ENCODE measurements at regions of chr18 and their contacts with region 1.

Region 1: GRCh38 chr18:13435596-13436327 is 217.2 kb downstream of the LDLRAD4 start:
- DNase-seq: peak; percentile 22
- H3K4me3 Mint-ChIP-seq: no peak overlapping the region
- H3K27ac Mint-ChIP-seq: no peak overlapping the region
- H3K4me1 Mint-ChIP-seq: peaks cover 58% of the 10 kb centered on the region
- H3K27me3 Mint-ChIP-seq: no peaks in the 10 kb centered on the region

Region 2: DNA sequence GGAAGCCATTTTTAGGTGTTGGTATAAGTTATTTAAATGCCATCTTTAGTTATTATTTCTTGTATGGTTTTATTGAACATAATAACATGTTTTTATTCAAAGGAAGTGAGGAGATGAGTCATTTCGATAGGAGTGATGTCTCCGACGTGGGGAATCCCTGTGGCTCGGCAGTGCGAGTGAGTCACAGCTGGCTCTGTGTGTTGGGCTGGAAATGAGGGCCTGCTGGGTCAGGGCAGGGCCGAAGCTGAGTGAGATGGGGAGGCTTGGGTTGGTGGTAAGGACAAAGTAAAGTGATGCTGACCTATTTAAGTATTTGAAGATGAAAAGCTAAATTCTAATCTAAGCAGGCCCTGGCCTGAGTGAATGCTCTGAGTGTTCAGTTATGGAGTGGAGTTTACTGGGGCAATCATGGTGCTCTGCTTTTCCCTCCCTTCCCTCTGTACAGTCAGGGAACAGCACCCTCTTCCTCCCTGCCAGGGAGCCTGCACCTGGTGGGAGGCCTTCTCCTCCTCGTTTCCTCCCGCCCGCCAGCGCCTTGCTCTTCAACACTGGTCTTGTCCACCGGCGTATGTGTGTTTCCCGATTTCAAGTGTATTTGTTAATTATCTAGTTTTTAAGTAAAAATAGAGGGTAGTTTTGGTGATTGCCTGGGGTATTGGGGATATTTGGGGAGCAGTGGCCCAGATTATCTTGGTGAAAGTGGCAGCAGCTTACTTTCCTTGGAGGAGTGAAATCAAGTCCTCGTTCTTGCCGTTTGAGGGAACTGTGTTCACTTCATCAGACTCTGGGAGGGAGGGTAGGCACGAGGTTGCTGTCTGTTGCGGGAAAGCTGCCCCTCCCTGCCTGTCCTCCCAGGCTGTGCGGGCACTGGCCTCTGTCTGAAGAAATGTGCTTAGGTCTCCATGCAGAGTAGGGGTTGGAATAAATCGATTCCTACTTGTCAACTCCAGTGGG is 60.2 kb before region 1 on chr18:
- CTCF ChIA-PET with region 1: interaction called, 4 read pairs
- POLR2A ChIA-PET with region 1: interaction called, 10 read pairs
- intact Hi-C with region 1: loop called (anchors 1 kb)
- DNase-seq: peak; percentile 92
- H3K4me3 Mint-ChIP-seq: peak overlapping the region; percentile 49
- H3K27ac Mint-ChIP-seq: peak overlapping the region; percentile 97
- H3K4me1 Mint-ChIP-seq: peaks cover 79% of the 10 kb centered on the region
- H3K27me3 Mint-ChIP-seq: no peaks in the 10 kb centered on the region

Region 3: GRCh38 chr18:13455960-13456471 is 20.3 kb after region 1 on chr18:
- CTCF ChIA-PET with region 1: no interaction called
- POLR2A ChIA-PET with region 1: interaction called, 3 read pairs
- intact Hi-C with region 1: loop called (anchors 2 kb)
- DNase-seq: peak; percentile 77
- H3K4me3 Mint-ChIP-seq: peak overlapping the region; percentile 33
- H3K27ac Mint-ChIP-seq: peak overlapping the region; percentile 23
- H3K4me1 Mint-ChIP-seq: peaks cover 31% of the 10 kb centered on the region
- H3K27me3 Mint-ChIP-seq: no peaks in the 10 kb centered on the region

Region 4: DNA sequence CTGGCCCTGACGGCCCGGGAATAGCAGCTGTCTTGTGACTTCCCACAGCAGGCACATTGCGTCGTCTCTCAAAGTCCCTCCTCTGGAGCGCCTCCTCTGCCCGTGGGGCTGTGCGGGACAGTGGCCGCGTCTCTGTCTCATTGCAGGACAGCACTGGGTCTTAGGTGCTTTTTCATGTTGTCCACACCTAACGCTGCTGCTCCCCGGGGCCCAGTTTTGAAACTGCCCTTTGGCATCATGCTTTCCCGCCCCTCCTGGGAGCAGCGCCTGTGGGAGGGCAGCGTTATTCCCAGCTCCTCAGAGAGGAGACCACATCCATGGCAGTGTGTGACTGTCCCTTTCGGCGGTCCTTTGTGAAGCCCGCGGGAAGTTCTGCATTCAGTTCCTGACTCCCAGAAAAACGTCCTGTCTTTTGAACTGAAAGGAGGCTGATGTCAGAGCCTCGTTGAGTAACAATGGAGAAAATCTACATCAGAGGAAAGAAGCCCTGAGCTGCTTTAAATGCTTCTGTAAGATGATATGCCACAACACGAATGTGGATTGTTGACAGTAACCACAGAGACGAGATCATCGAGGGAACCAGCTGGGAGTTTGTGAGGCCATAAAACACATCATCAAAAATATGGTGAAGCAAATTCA is 64.6 kb after region 1 on chr18:
- CTCF ChIA-PET with region 1: no interaction called
- POLR2A ChIA-PET with region 1: no interaction called
- intact Hi-C with region 1: loop called (anchors 1 kb)
- DNase-seq: peak; percentile 27
- H3K4me3 Mint-ChIP-seq: no peak overlapping the region
- H3K27ac Mint-ChIP-seq: no peak overlapping the region
- H3K4me1 Mint-ChIP-seq: peaks cover 36% of the 10 kb centered on the region
- H3K27me3 Mint-ChIP-seq: no peaks in the 10 kb centered on the region

Region 5: GRCh38 chr18:13551841-13552733 is 116.3 kb after region 1 on chr18:
- CTCF ChIA-PET with region 1: no interaction called
- POLR2A ChIA-PET with region 1: no interaction called
- intact Hi-C with region 1: no loop called
- DNase-seq: no peak
- H3K4me3 Mint-ChIP-seq: no peak overlapping the region
- H3K27ac Mint-ChIP-seq: no peak overlapping the region
- H3K4me1 Mint-ChIP-seq: peaks cover 11% of the 10 kb centered on the region
- H3K27me3 Mint-ChIP-seq: no peaks in the 10 kb centered on the region

Region 6: DNA sequence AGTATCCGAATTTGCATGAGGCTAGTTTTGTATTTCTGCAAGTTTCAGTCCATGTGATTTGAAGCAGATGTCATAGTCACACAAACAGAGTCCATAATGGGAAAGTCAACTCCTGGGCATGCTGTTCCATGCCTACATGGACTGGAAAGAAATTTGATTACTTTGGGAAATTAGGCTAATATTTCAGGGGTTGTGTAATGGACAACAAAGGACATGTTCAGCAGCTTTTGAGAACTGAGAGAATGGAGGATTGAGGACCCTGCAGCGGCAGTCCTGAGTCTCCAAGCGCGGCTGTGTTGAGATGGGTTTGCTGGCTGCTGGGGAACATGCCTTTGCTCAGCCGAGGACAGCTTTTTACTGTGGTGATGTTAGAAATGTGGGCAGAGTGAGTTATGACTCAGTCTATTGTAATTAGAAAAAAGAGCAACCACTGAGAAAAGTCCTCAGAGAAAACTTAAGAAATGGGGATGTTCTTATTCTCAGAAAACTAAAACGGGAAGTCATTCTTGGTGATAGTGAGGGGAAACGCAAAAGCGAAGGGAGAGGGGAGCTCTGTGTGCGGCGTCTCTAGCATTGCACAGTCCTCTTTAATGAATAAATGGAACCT is 141.4 kb after region 1 on chr18:
- CTCF ChIA-PET with region 1: no interaction called
- POLR2A ChIA-PET with region 1: no interaction called
- intact Hi-C with region 1: loop called (anchors 5 kb)
- DNase-seq: peak; percentile 70
- H3K4me3 Mint-ChIP-seq: peak overlapping the region; percentile 31
- H3K27ac Mint-ChIP-seq: peak overlapping the region; percentile 52
- H3K4me1 Mint-ChIP-seq: peaks cover 45% of the 10 kb centered on the region
- H3K27me3 Mint-ChIP-seq: no peaks in the 10 kb centered on the region

Measured in activated CD4-positive, alpha-beta memory T cell treated with anti-CD3 and anti-CD28 coated beads for 36 hours (primary cell).